SK-N-SH (cell line): ENCODE measurements at regions of chr2 and their contacts with region 1.

Region 1: DNA sequence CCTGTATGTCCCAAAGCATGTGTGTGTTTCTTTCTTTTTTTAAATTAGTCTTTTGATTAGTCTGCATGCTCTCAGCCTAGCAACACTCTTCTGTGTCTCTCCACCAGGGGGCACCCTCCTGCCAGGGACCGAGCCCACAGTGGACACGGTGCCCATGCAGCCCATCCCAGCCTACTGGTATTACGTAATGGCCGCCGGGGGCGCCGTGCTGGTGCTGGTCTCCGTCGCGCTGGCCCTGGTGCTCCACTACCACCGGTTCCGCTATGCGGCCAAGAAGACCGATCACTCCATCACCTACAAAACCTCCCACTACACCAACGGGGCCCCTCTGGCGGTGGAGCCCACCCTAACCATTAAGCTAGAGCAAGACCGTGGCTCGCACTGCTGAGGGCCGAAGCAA is 93.8 kb downstream of the NRP2 start:
- DNase-seq: peak; percentile 61
- H3K4me3 ChIP-seq: no peak overlapping the region
- H3K27ac ChIP-seq: no peak overlapping the region
- H3K4me1 ChIP-seq: peaks cover 9 to 10% of the 10 kb centered on the region in 2 experiments
- H3K27me3 ChIP-seq: no peaks in the 10 kb centered on the region
- CTCF ChIP-seq: peak; percentile 62
- EP300 ChIP-seq: no peak
- RAD21 ChIP-seq: peak; percentile 70

Region 2: DNA sequence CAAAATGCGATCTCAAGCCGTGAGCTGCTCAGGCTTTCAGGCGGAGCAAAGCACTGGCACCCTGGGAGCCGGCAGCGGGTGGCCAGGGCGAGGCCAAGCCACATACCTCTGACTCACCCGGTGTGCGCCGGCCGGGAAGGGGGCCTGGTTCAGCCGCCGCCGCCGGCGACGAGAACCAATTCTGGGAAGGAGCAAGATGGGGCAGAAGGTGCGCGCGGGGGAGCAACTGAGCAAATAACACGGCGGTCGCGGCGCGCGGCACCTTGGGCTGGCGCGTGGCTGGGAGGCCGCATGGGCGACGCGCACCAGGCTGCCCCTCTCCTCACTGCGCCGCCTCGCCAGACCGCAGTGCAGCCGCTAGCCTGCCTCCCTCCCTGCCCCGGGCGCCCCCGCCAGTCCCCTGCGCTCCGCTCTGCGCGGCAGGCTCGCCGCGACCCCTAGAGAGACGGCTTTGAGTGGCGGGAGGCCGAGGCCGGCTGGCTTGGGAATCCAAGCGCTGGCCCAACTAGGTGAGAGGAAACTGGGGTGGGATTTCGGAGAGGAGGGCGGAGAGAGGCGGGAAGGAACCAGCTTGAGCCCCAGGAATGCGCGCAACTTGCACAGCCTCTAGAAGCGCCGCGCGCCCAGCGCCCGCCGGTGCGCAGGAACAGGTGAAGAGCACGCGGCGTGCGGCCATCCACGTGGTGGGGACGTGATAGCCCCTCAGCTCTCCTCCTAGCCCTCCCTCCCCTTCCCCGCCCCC is 90.7 kb before region 1 on chr2:
- CTCF ChIA-PET with region 1: no interaction called
- POLR2A ChIA-PET with region 1: no interaction called
- DNase-seq: peak; percentile 76
- H3K4me3 ChIP-seq: peak overlapping the region; percentile 71 to 77
- H3K27ac ChIP-seq: peak overlapping the region in 1 of 2 experiments; percentile 47; a peak in 2 of 4 replicates
- H3K4me1 ChIP-seq: peaks cover 37 to 43% of the 10 kb centered on the region in 2 experiments
- H3K27me3 ChIP-seq: no peaks in the 10 kb centered on the region
- CTCF ChIP-seq: no peak
- EP300 ChIP-seq: no peak
- RAD21 ChIP-seq: no peak

Region 3: GRCh38 chr2:205754924-205755321 is 21.2 kb before region 1 on chr2:
- CTCF ChIA-PET with region 1: no interaction called
- POLR2A ChIA-PET with region 1: no interaction called
- DNase-seq: no peak
- H3K4me3 ChIP-seq: no peak overlapping the region
- H3K27ac ChIP-seq: no peak overlapping the region
- H3K4me1 ChIP-seq: peaks cover 8 to 21% of the 10 kb centered on the region in 2 experiments; a peak in 3 of 4 replicates
- H3K27me3 ChIP-seq: no peaks in the 10 kb centered on the region
- CTCF ChIP-seq: no peak
- EP300 ChIP-seq: no peak
- RAD21 ChIP-seq: no peak

Region 4: GRCh38 chr2:205792908-205793307 is 16.8 kb after region 1 on chr2:
- CTCF ChIA-PET with region 1: interaction called, 10 read pairs
- POLR2A ChIA-PET with region 1: no interaction called
- DNase-seq: no peak
- H3K4me3 ChIP-seq: no peak overlapping the region
- H3K27ac ChIP-seq: no peak overlapping the region
- H3K4me1 ChIP-seq: no peaks in the 10 kb centered on the region; a peak in 1 of 4 replicates
- H3K27me3 ChIP-seq: no peaks in the 10 kb centered on the region
- CTCF ChIP-seq: no peak
- EP300 ChIP-seq: no peak
- RAD21 ChIP-seq: no peak

Region 5: DNA sequence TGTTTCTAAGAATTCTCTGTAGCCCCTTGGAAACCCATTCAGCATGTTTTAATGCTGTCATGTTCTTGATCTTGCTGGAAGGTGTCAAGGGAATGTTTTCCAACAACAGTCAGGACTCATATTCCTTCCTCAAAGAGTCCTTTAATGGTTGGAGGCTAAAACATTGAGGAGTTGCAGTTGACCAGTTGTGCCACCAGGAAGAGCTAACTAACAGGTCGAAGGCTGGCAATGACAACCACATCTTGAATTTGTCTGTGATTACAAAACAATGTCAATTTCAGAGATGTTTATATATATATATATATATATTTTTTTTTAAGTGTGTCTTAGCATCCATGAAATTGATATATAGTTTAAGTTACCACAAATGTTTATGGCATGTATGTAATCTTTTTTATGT is 158.3 kb after region 1 on chr2:
- CTCF ChIA-PET with region 1: interaction called, 11 read pairs
- POLR2A ChIA-PET with region 1: no interaction called
- DNase-seq: no peak
- H3K4me3 ChIP-seq: no peak overlapping the region
- H3K27ac ChIP-seq: no peak overlapping the region
- H3K4me1 ChIP-seq: peaks cover 0 to 8% of the 10 kb centered on the region in 2 experiments; a peak in 1 of 4 replicates
- H3K27me3 ChIP-seq: no peaks in the 10 kb centered on the region
- CTCF ChIP-seq: peak; percentile 12; the same call in 1 of the 2 replicates
- EP300 ChIP-seq: no peak
- RAD21 ChIP-seq: no peak